Activated naive CD8-positive, alpha-beta T cell treated with anti-CD3 and anti-CD28 coated beads, Interleukin-2, amount 10 ng/mL, durations not matched to agents 7 days and 5 days (primary cell): ENCODE measurements at regions of chr2 and their contacts with region 1.

Region 1: DNA sequence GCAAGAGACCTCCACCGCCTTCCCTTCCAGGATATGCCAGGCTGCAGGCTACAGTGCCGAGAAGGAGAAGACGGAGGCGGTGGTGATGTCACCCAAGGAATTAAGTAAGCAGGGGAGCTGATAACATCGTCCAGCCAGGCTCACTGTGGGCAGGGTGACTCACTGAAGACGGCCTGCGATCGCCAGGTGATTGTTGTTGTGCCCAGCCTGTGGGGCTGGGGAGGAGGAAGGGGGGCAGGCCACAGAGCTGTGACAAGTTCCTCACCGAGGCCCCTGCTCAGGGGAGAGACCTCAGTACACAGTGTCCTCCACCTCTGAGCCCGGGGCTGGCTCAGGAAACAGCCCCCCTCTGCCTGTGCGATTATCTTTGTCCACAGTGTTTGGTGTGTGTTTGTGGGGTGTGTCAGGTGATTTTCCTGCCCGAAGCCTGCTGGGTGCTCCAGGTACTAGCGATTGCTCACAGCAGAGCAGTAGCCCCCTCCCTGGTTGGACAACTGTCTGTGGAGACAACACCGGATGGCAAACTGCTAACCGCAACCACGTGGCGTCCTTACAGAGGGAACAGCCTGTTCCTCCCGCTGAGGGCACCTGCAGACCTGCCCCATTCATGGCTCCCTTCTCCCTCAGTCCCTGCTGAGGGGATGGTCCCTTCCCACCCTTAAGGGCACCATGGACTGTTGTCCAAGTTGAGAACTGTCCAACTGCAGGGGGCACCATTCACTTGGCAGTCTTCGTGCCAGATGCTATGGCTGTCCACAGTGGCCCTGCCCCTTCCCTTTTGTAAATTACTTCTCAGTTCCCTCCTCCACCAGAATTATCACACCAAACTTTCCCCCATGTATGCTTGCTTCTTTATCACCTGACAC is 95.1 kb downstream of the ZFP36L2 start:
- DNase-seq: peak; percentile 83
- ATAC-seq: peak; percentile 49
- H3K4me3 Mint-ChIP-seq: peak overlapping the region; percentile 64
- H3K27ac Mint-ChIP-seq: peak overlapping the region; percentile 100
- H3K4me1 Mint-ChIP-seq: peaks cover 77% of the 10 kb centered on the region
- H3K27me3 Mint-ChIP-seq: no peaks in the 10 kb centered on the region

Region 2: DNA sequence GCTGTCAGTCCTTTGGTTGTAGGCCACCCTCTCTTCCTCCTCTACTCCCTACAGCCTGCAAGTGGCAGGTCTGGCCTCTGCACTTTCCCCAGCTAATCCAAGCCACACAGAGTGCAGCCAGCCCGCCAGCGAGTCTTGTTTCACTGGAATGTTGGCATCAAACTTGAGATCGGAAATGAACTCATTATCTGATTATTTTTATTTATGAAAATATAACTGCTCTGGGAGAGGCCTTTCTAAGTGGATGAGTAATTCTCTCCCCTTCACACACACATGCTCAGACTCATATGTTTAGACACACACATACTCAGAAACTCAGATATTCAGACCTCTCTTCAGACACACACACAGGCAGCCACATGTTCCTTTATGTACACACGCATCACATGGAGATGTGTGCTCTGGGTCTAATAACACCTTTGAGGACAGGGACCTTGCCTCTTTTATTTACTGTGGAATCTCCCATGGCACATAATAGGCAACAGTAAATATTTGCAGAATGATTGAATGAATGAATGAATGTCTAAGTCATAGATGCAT is 56.1 kb before region 1 on chr2:
- POLR2A ChIA-PET with region 1: no interaction called
- DNase-seq: no peak
- ATAC-seq: no peak
- H3K4me3 Mint-ChIP-seq: no peak overlapping the region
- H3K27ac Mint-ChIP-seq: no peak overlapping the region
- H3K4me1 Mint-ChIP-seq: peaks cover 1% of the 10 kb centered on the region
- H3K27me3 Mint-ChIP-seq: no peaks in the 10 kb centered on the region

Region 3: DNA sequence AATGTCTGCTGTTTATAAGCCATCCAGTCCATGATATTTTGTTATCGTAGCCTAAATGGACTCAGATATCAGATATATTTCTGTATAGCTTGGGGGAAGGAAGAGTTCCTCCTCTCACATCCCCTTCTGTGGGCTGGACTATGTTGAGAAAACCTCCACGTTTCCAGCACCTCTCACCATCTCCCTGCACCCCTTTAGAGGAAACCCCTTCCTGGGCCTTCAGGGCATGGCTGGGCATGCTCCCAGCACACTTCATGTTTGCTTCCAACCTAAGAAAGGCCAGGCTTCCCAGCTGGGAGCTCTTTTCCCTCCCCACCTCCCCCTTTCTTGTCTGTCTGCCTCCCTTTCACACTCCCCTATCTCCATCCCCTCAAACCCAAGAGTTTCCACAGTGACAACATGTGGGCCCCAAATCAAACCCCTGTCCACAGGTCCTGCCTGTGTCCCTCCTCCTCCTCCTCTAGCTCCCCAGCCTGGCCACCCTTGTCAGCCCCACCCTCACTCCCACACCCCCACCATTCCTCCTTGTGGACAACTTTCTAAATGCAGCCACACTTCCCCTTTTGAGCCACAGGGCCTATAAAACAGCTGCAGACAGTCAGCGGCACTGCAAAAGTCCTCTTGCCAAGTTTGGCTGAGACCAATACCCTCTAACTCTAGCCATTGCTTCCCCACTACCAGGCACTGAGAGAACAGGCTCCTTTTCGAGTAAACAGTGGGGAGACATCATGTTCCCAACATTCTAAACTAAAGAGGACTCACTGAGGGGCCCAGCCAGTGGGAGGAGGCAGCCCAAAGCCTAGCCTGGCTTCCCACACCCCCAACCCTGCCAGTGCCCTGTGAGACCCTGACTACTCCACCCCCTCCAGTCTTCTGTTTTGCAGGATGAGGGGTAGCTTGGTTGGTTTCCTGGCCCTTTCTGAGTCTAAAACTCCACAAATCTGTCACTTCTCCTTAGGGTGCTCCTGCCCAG is 25.4 kb before region 1 on chr2:
- POLR2A ChIA-PET with region 1: no interaction called
- DNase-seq: no peak
- ATAC-seq: no peak
- H3K4me3 Mint-ChIP-seq: no peak overlapping the region
- H3K27ac Mint-ChIP-seq: no peak overlapping the region
- H3K4me1 Mint-ChIP-seq: peaks cover 12% of the 10 kb centered on the region
- H3K27me3 Mint-ChIP-seq: no peaks in the 10 kb centered on the region

Region 4: DNA sequence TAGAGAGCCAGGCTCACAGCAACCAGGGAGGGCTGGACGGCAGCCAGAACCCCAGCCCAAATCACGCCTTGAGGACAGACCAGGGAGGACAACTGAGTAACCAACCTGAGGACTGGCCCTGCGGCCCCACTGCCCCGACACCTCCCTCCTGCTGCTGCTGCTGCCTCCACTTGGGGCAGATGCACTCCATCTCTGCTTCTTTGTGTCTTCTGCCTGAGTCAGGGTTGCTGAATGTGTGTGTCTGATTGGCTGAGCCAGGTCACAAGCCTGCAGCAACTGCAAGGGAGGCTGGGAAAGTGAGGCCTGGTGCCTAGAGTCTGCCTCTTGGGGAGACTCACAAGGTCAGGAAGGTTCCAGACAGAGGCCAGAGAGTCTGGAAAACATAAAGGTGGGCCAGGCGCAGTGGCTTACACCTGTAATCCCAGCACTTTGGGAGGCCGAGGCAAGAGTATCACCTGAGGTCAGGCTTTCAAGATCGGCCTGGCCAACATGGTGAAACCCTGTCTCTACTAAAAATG is 11.7 kb after region 1 on chr2:
- POLR2A ChIA-PET with region 1: interaction called, 35 read pairs
- DNase-seq: peak; percentile 58
- ATAC-seq: peak; percentile 76
- H3K4me3 Mint-ChIP-seq: peak overlapping the region; percentile 85
- H3K27ac Mint-ChIP-seq: peak overlapping the region; percentile 85
- H3K4me1 Mint-ChIP-seq: peaks cover 50% of the 10 kb centered on the region
- H3K27me3 Mint-ChIP-seq: no peaks in the 10 kb centered on the region

Region 5: GRCh38 chr2:43149482-43150107 is 18.3 kb after region 1 on chr2:
- POLR2A ChIA-PET with region 1: interaction called, 50 read pairs
- DNase-seq: peak; percentile 54
- ATAC-seq: peak; percentile 81
- H3K4me3 Mint-ChIP-seq: peak overlapping the region; percentile 61
- H3K27ac Mint-ChIP-seq: peak overlapping the region; percentile 89
- H3K4me1 Mint-ChIP-seq: peaks cover 46% of the 10 kb centered on the region
- H3K27me3 Mint-ChIP-seq: no peaks in the 10 kb centered on the region

Region 6: GRCh38 chr2:43158259-43158880 is 27.1 kb after region 1 on chr2:
- POLR2A ChIA-PET with region 1: interaction called, 22 read pairs
- DNase-seq: peak; percentile 69
- ATAC-seq: peak; percentile 67
- H3K4me3 Mint-ChIP-seq: peak overlapping the region; percentile 71
- H3K27ac Mint-ChIP-seq: peak overlapping the region; percentile 95
- H3K4me1 Mint-ChIP-seq: peaks cover 44% of the 10 kb centered on the region
- H3K27me3 Mint-ChIP-seq: no peaks in the 10 kb centered on the region

Region 7: GRCh38 chr2:43169987-43170386 is 38.7 kb after region 1 on chr2:
- POLR2A ChIA-PET with region 1: interaction called, 94 read pairs
- DNase-seq: peak; percentile 76
- ATAC-seq: peak; percentile 19
- H3K4me3 Mint-ChIP-seq: peak overlapping the region; percentile 85
- H3K27ac Mint-ChIP-seq: peak overlapping the region; percentile 98
- H3K4me1 Mint-ChIP-seq: peaks cover 63% of the 10 kb centered on the region
- H3K27me3 Mint-ChIP-seq: peaks cover 2% of the 10 kb centered on the region

Region 8: DNA sequence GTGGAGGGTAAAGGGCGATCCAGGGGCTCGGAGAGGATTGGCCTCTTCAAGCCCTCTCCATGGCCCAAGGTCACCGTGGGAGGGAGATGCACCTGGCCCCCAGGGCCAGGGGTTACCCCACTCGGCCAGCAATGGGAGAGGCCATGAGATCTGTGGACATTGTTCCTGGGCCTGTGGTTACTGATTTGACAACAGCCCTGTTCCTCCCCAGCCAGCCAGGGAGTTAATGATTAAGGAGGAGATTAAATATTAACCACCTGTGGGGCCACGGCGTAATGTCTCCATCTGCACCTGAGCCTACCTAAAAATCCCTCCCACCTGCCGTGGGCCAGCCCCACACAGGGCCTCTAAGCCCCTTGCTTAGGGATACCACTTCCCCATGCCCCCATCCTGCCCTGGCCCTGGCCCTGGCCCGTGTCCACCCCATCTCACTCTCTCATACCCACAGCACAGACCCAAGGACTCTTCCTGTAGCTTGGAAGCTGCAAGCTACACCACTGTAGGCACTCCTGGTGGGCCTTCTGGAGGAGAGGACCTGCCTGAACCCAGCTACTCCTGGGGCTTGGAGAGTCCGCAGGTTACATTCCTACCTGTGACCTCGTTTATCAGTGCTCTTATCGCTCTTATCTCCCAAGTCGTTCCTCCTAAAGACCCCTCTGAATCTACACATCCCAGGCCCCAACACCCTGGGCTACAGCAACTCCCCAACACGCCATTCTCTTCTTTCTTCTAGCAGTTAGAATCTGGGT is 63.0 kb after region 1 on chr2:
- POLR2A ChIA-PET with region 1: interaction called, 54 read pairs
- DNase-seq: peak; percentile 53
- ATAC-seq: peak; percentile 12
- H3K4me3 Mint-ChIP-seq: peak overlapping the region; percentile 81
- H3K27ac Mint-ChIP-seq: peak overlapping the region; percentile 94
- H3K4me1 Mint-ChIP-seq: peaks cover 57% of the 10 kb centered on the region
- H3K27me3 Mint-ChIP-seq: no peaks in the 10 kb centered on the region

Region 9: DNA sequence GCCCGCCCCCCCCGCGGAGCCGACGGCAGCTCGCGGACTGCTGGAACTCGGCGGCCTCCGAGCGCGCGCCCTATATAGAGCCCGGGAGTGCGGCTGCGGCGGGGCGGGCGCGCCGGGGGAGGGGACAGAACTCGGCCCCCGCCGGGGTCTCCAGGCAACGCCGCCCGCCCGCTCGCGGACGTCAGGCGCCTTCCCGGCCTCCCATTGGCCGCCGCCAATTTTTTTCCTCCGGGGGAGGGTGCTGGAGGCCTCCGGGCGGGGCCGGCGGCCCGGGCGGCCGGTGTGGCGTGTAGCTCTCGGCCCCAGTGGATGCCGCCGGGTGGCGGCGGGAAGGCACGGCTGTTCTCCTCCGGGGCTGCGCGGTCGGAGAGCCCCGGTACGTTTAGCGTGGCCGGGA is 95.3 kb after region 1 on chr2 and contains the start of gene ZFP36L2:
- POLR2A ChIA-PET with region 1: interaction called, 1,375 read pairs
- DNase-seq: peak; percentile 99
- ATAC-seq: peak; percentile 62
- H3K4me3 Mint-ChIP-seq: peak within 1 kb of the TSS; percentile 98
- H3K27ac Mint-ChIP-seq: peak within 1 kb of the TSS; percentile 94
- H3K4me1 Mint-ChIP-seq: peaks cover 26% of the 10 kb centered on the region
- H3K27me3 Mint-ChIP-seq: no peaks in the 10 kb centered on the region
- total RNA-seq, gene ZFP36L2: 207 to 218 TPM